T-cell (primary cell): ENCODE measurements at regions of chr16 and their contacts with region 1.

Region 1: GRCh38 chr16:85615852-85616606 is 2.9 kb downstream of the GSE1 start:
- DNase-seq: peak; percentile 61 to 89 (median 78)
- ATAC-seq: peak; percentile 54 to 67 (median 58)
- H3K4me3 ChIP-seq: peak overlapping the region; percentile 12 to 58
- H3K4me3 Mint-ChIP-seq: peak overlapping the region; percentile 66 to 78 (median 71)
- H3K27ac ChIP-seq: peak overlapping the region; percentile 25
- H3K27ac Mint-ChIP-seq: peak overlapping the region; percentile 66 to 74
- H3K4me1 ChIP-seq: peaks cover 21 to 78% of the 10 kb centered on the region in 2 experiments
- H3K4me1 Mint-ChIP-seq: peaks cover 32 to 54% (median 39%) of the 10 kb centered on the region in 3 donors
- H3K27me3 ChIP-seq: peaks cover 0 to 34% of the 10 kb centered on the region in 2 experiments
- H3K27me3 Mint-ChIP-seq: peaks cover 0 to 3% of the 10 kb centered on the region in 2 donors

Region 2: DNA sequence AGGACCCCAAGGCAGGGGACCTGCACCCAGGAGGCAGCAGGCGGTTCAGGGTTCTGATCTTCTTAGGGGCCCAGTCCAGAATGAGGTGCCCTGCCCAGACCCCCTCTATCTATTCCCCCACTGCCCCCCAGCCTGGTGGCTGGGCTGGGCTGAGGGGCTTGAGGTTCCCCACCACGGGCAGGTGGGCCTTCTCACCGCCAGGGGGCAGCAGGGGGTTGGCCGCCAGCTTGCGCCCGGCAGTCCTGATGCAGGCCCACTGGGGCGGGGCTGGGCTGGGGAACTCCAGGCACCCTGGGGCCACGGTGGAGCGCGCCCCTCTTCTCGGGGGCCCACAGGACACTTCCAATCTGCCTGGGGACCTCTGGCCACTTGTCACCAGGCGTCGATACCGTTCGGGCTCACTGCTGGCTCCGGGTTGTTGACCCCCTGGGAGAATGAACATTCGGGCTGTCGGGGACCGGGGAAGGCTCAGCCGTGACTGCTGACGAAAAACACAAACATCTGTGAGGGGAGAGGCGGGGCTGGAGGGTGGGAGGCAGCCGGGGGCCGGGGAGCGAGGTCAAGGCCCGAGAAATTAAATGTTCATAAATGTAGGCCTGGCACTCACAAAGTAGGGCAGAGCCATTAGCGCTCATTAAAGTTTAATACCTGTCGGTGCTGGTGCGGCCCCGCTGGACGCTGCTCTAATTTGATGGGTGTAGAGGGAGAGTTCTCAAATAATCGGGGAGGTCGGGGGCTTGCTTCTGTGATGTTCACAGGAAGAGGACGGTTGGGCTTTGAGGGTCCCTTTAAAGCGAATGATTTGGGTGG is 222.2 kb before region 1 on chr16:
- CTCF ChIA-PET with region 1: interaction called, 4 to 13 read pairs
- POLR2A ChIA-PET with region 1: no interaction called
- DNase-seq: peak in 34 of 35 experiments; percentile 30 to 76 (median 52)
- ATAC-seq: peak; percentile 70 to 86 (median 76)
- H3K4me3 ChIP-seq: no peak overlapping the region
- H3K4me3 Mint-ChIP-seq: no peak overlapping the region
- H3K27ac ChIP-seq: no peak overlapping the region
- H3K27ac Mint-ChIP-seq: no peak overlapping the region
- H3K4me1 ChIP-seq: no peaks in the 10 kb centered on the region
- H3K4me1 Mint-ChIP-seq: no peaks in the 10 kb centered on the region
- H3K27me3 ChIP-seq: peaks cover 0 to 5% of the 10 kb centered on the region in 2 experiments
- H3K27me3 Mint-ChIP-seq: peaks cover 0 to under 1% of the 10 kb centered on the region in 2 donors

Region 3: DNA sequence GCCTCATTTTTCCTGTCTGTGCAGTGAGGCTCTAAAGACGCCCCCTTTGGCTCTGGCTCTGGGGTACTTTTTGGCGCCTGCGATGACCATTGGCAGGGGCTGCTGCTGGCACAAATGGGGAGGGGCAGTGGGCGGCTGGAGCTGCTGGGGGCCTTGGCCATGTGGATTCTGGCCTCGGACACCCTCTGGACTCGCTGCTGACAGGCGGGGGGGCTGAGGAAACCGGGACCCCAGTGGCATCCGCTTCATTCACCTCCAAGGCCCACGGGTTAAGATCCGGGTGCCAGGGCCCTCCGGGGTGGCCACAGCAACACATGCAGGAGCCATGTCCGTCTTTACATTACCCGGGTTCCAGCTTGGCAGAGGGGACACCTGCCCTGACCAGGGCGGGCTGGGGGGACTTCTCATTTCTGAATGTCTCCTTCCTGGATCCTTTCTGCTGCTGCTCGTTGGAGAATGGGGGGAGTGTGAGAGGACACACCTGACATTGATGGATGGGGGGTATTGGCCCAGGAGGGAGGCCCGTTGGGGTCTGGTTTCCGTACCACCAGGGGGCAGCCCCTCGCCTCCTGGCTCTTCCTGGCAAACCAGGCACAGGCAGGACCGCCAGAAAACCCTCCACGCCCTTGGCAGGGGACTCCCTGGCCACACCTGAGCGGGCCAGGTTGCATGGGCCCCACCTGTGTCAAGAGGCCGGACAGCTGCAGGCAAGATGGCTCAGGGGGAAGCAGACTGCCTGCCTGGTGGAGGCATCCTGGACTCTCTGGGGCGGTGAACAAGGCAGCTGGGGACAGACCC is 18.9 kb after region 1 on chr16:
- CTCF ChIA-PET with region 1: no interaction called
- POLR2A ChIA-PET with region 1: no interaction called
- DNase-seq: no peak
- ATAC-seq: no peak
- H3K4me3 ChIP-seq: no peak overlapping the region
- H3K4me3 Mint-ChIP-seq: no peak overlapping the region
- H3K27ac ChIP-seq: no peak overlapping the region
- H3K27ac Mint-ChIP-seq: no peak overlapping the region
- H3K4me1 ChIP-seq: peaks cover 0 to 34% of the 10 kb centered on the region in 2 experiments
- H3K4me1 Mint-ChIP-seq: peaks cover 0 to 4% (median 2%) of the 10 kb centered on the region in 3 donors
- H3K27me3 ChIP-seq: no peaks in the 10 kb centered on the region
- H3K27me3 Mint-ChIP-seq: no peaks in the 10 kb centered on the region